PC-9 (cell line): ENCODE measurements at regions of chr12 and their contacts with region 1.

Region 1: GRCh38 chr12:99043319-99043914 is 398.3 kb downstream of the APAF1 start:
- DNase-seq: peak; percentile 40 to 50
- H3K4me3 ChIP-seq: no peak overlapping the region
- H3K27ac ChIP-seq: no peak overlapping the region
- H3K4me1 ChIP-seq: no peaks in the 10 kb centered on the region
- H3K27me3 ChIP-seq: peaks cover 4% of the 10 kb centered on the region; the same call in 1 of the 2 replicates
- CTCF ChIP-seq: peak; percentile 84

Region 2: GRCh38 chr12:98644711-98645402 is 398.6 kb before region 1 on chr12 and contains the starts of genes APAF1 and IKBIP:
- CTCF ChIA-PET with region 1: no interaction called
- POLR2A ChIA-PET with region 1: no interaction called
- intact Hi-C with region 1: no loop called
- DNase-seq: peak; percentile 84 to 98
- H3K4me3 ChIP-seq: peak within 1 kb of the TSS; percentile 85
- H3K27ac ChIP-seq: peak within 1 kb of the TSS; percentile 29
- H3K4me1 ChIP-seq: peaks cover 7% of the 10 kb centered on the region; the same call in 1 of the 2 replicates
- H3K27me3 ChIP-seq: no peaks in the 10 kb centered on the region
- CTCF ChIP-seq: no peak
- total RNA-seq, gene APAF1: 12.8 and 19.1 TPM in 2 replicates
- total RNA-seq, gene IKBIP: 6.6 and 7.2 TPM in 2 replicates

Region 3: DNA sequence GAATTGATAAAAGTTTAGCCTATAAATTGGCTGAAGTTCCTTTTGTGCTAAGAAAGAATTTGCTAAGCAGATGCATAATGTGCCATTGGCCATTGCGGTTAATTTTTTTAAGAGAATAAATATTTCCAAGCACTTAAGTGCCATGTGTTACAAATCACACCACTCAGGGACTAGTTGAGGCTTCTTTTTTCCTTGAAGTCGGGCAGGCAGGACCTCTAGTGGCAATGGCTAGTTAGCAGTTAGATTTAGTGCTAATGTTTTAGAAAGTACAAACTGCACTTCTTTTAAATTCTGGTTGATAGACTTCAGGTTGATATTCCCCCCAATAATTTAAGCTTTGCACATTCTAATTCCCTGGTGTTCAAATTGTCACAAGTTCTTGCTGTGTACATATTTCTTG is 104.1 kb before region 1 on chr12:
- CTCF ChIA-PET with region 1: no interaction called
- POLR2A ChIA-PET with region 1: no interaction called
- intact Hi-C with region 1: no loop called
- DNase-seq: no peak
- H3K4me3 ChIP-seq: no peak overlapping the region
- H3K27ac ChIP-seq: no peak overlapping the region
- H3K4me1 ChIP-seq: no peaks in the 10 kb centered on the region
- H3K27me3 ChIP-seq: peaks cover 15% of the 10 kb centered on the region
- CTCF ChIP-seq: peak; percentile 53

Region 4: DNA sequence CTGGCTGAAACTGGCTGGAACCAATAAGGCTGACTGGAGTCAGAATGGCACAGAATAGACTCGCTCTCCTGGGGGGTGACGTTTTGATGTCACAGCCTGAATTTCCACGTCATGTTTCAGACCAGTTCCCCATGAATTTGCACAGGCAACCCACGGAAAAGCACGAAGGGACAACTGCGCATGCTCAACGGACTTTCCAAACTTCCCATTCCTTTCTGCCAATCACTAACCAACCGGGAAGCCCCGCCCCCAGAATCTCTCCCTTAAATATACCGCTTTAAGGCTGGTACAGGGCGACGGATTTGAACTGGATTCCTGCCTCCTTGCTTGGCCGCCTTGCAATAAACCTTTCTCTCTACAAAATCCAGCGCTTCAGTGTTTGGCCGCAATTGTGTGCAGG is 36.4 kb after region 1 on chr12:
- CTCF ChIA-PET with region 1: no interaction called
- POLR2A ChIA-PET with region 1: no interaction called
- intact Hi-C with region 1: no loop called
- DNase-seq: no peak
- H3K4me3 ChIP-seq: no peak overlapping the region
- H3K27ac ChIP-seq: no peak overlapping the region
- H3K4me1 ChIP-seq: no peaks in the 10 kb centered on the region
- H3K27me3 ChIP-seq: peaks cover 15% of the 10 kb centered on the region; the same call in 1 of the 2 replicates
- CTCF ChIP-seq: no peak

Region 5: GRCh38 chr12:99390707-99391106 is 347.3 kb after region 1 on chr12:
- CTCF ChIA-PET with region 1: no interaction called
- POLR2A ChIA-PET with region 1: no interaction called
- intact Hi-C with region 1: loop called (anchors 10 kb)
- DNase-seq: peak in 1 of 2 experiments; percentile 3
- H3K4me3 ChIP-seq: no peak overlapping the region
- H3K27ac ChIP-seq: no peak overlapping the region
- H3K4me1 ChIP-seq: no peaks in the 10 kb centered on the region
- H3K27me3 ChIP-seq: no peaks in the 10 kb centered on the region
- CTCF ChIP-seq: peak; percentile 49; the same call in 1 of the 2 replicates

Region 6: GRCh38 chr12:99658671-99659349 is 615.4 kb after region 1 on chr12:
- CTCF ChIA-PET with region 1: interaction called, 11 read pairs
- POLR2A ChIA-PET with region 1: no interaction called
- intact Hi-C with region 1: loop called (anchors 1 kb)
- DNase-seq: no peak
- H3K4me3 ChIP-seq: no peak overlapping the region
- H3K27ac ChIP-seq: no peak overlapping the region
- H3K4me1 ChIP-seq: no peaks in the 10 kb centered on the region
- H3K27me3 ChIP-seq: no peaks in the 10 kb centered on the region
- CTCF ChIP-seq: peak; percentile 52

Region 7: GRCh38 chr12:99767809-99768208 is 724.4 kb after region 1 on chr12:
- CTCF ChIA-PET with region 1: interaction called, 4 read pairs
- POLR2A ChIA-PET with region 1: no interaction called
- intact Hi-C with region 1: loop called (anchors 5 kb)
- DNase-seq: no peak
- H3K4me3 ChIP-seq: no peak overlapping the region
- H3K27ac ChIP-seq: no peak overlapping the region
- H3K4me1 ChIP-seq: no peaks in the 10 kb centered on the region
- H3K27me3 ChIP-seq: no peaks in the 10 kb centered on the region
- CTCF ChIP-seq: peak; percentile 60